Activated CD4-positive, alpha-beta T cell treated with anti-CD3 and anti-CD28 coated beads, Interleukin-2, amount 10 ng/mL, durations not matched to agents 24 days and 14 days (primary cell): ENCODE measurements at regions of chr6 and their contacts with region 1.

Region 1: DNA sequence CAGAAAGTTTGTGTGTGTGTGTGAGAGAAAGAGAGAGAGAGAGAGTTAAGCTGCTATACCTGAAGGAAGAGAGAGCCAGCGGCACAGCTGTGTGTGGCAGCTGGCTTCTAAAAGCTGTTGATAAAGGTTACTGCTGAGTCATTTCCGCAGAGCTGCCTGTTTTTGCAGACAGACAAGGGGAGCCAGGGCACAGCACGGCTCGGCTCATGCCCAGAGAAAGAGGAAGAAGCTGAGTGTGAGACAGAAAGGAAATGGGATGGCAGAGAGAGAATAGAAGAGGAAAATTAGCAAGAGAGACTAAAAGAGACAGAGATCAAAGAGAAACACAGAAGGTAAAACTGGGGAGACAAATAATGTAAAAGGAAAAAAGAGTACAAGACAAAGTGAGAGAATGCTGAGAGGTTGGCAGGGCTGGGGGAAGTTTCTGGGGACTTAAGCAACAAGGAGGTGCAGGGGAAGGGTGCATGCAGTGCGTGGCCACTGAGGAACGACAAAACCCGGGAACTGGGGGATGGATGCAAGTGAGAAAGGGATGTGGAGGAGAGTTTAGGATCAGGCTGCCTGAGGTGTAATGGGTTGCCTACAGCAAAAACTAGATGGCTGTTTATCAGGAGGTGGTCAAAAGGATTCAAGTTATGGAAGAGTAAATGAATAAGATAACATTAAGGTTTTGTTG is 22.7 kb downstream of the HLA-A start:
- DNase-seq: peak; percentile 93
- H3K4me3 Mint-ChIP-seq: peak overlapping the region; percentile 94
- H3K27ac Mint-ChIP-seq: peak overlapping the region; percentile 97
- H3K4me1 Mint-ChIP-seq: peaks cover 42% of the 10 kb centered on the region
- H3K27me3 Mint-ChIP-seq: peaks cover 3% of the 10 kb centered on the region

Region 2: GRCh38 chr6:29676981-29677601 is 287.9 kb before region 1 on chr6:
- intact Hi-C with region 1: no loop called
- DNase-seq: no peak
- H3K4me3 Mint-ChIP-seq: no peak overlapping the region
- H3K27ac Mint-ChIP-seq: peak overlapping the region; percentile 21
- H3K4me1 Mint-ChIP-seq: peaks cover 11% of the 10 kb centered on the region
- H3K27me3 Mint-ChIP-seq: peaks cover 2% of the 10 kb centered on the region

Region 3: GRCh38 chr6:29737707-29738630 is 227.1 kb before region 1 on chr6:
- intact Hi-C with region 1: loop called (anchors 10 kb)
- DNase-seq: peak; percentile 92
- H3K4me3 Mint-ChIP-seq: no peak overlapping the region
- H3K27ac Mint-ChIP-seq: no peak overlapping the region
- H3K4me1 Mint-ChIP-seq: peaks cover 18% of the 10 kb centered on the region
- H3K27me3 Mint-ChIP-seq: no peaks in the 10 kb centered on the region

Region 4: DNA sequence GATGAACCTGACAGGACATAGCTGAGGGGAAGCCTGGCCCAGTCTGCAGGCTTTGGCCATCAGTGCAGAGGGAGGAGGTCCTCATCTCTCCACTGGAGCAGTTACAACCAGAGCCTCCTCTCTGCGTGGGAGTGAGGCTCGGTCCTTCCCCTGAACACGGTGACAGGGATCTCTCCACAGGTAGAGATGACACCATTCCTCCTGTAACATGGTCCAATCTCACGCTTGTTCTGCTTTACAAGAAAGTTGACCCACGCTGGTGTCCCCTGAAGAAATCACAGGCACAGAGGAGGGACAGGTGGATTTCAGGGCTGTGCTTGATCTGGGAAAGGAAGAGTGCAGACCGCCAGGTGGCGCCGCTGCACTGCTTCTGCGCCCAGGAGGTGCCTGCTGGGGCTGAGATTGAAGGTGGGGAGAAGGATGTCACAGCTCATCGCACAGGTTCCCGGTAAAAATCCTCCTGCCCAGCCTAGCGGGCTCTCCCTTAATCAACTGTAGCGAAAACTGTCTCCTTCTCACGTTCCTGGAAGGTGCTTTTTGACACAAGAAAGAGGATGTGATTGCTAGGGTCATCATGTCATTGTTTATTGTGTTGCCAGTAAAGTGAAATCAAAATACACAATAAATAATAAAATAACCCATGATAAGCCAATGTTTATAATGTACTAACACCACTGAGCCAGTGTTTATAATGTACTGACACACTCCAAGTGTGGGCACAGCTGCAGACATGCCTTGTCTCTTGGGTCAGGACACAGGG is 117.0 kb before region 1 on chr6:
- intact Hi-C with region 1: loop called (anchors 2 kb)
- DNase-seq: peak; percentile 95
- H3K4me3 Mint-ChIP-seq: no peak overlapping the region
- H3K27ac Mint-ChIP-seq: no peak overlapping the region
- H3K4me1 Mint-ChIP-seq: peaks cover 26% of the 10 kb centered on the region
- H3K27me3 Mint-ChIP-seq: peaks cover 55% of the 10 kb centered on the region

Region 5: DNA sequence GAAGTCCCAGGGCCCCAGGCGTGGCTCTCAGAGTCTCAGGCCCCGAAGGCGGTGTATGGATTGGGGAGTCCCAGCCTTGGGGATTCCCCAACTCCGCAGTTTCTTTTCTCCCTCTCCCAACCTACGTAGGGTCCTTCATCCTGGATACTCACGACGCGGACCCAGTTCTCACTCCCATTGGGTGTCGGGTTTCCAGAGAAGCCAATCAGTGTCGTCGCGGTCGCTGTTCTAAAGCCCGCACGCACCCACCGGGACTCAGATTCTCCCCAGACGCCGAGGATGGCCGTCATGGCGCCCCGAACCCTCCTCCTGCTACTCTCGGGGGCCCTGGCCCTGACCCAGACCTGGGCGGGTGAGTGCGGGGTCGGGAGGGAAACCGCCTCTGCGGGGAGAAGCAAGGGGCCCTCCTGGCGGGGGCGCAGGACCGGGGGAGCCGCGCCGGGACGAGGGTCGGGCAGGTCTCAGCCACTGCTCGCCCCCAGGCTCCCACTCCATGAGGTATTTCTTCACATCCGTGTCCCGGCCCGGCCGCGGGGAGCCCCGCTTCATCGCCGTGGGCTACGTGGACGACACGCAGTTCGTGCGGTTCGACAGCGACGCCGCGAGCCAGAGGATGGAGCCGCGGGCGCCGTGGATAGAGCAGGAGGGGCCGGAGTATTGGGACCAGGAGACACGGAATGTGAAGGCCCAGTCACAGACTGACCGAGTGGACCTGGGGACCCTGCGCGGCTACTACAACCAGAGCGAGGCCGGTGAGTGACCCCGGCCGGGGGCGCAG is 22.6 kb before region 1 on chr6 and contains the start of gene HLA-A:
- intact Hi-C with region 1: loop called (anchors 1 kb)
- DNase-seq: peak; percentile 97
- H3K4me3 Mint-ChIP-seq: peak within 1 kb of the TSS; percentile 95
- H3K27ac Mint-ChIP-seq: peak within 1 kb of the TSS; percentile 99
- H3K4me1 Mint-ChIP-seq: peaks cover 46% of the 10 kb centered on the region
- H3K27me3 Mint-ChIP-seq: no peaks in the 10 kb centered on the region
- total RNA-seq, gene HLA-A: 1,449 and 1,452 TPM in 2 replicates

Region 6: DNA sequence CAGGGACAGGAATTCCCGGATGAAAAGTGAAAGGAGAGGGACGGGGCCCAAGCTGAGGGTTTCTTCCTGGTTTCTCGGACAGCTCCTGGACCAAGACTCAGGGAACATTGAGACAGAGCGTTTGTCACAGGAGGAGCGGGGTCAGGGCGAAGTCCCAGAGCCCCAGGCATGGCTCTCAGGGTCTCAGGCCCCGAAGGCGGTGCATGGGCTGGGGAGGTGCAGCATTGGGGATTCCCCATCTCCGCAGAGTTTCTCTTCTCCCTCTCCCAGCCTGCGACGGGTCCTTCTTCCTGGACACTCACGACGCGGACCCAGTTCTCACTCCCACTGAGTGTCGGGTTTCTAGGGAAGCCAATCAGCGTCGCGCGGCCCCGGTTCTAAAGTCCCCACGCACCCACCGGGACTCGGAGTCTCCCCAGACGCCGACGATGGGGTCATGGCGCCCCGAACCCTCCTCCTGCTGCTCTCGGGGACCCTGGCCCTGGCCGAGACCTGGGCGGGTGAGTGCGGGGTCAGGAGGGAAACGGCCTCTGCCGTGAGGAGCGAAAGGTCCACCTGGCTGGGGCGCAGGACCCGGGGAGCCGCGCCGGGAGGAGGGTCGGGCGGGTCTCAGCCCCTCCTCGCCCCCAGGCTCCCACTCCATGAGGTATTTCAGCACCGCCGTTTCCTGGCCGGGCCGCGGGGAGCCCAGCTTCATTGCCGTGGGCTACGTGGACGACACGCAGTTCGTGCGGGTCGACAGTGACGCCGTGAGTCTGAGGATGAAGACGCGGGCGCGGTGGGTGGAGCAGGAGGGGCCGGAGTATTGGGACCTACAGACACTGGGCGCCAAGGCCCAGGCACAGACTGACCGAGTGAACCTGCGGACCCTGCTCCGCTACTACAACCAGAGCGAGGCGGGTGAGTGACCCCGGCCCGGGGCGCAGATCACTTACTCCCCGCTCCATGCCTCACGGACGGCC is 41.4 kb after region 1 on chr6:
- intact Hi-C with region 1: loop called (anchors 5 kb)
- DNase-seq: peak; percentile 68
- H3K4me3 Mint-ChIP-seq: peak overlapping the region; percentile 74
- H3K27ac Mint-ChIP-seq: no peak overlapping the region
- H3K4me1 Mint-ChIP-seq: peaks cover 6% of the 10 kb centered on the region
- H3K27me3 Mint-ChIP-seq: peaks cover 32% of the 10 kb centered on the region